PC-3 (cell line): ENCODE measurements at regions of chr14 and their contacts with region 1.

Region 1: DNA sequence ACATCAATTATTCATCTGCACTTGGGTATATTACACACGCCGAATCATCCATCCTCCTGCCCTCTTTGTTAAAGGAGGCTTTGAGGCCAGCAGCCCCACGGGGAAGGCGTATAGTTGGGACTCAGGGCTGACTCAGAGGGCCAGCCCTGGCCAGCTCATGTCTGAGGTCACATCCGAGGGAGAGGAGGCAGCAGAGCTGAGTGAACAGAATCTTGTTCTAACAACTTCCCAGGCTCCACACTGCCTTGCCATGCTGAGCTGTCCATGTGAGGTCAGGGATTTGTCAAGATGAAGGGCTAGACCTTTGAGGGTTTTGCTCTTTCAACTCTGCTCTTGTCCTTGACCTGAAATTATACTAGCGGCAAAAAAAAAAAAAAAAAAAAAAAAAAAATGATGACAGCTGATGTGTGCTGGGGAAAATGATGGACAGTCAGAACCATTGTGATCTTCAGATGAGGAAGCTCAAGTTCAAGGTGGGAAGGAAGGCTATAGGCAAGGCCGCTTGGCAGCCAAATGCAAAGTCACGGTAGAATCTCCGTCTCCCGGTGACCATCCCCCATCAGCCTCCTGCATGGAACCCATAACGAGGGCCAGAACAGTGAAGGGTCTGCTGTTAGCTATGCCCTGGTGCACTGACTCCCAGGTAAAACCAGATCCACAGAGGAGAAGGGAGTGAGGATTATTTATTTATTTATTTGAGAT is 12.5 kb upstream of the MARK3 start:
- DNase-seq: peak; percentile 97
- ATAC-seq: peak; percentile 100
- H3K4me3 ChIP-seq: no peak overlapping the region
- H3K27ac ChIP-seq: peak overlapping the region; percentile 93
- H3K4me1 ChIP-seq: peaks cover 20% of the 10 kb centered on the region
- H3K27me3 ChIP-seq: no peaks in the 10 kb centered on the region
- CTCF ChIP-seq: no peak

Region 2: GRCh38 chr14:103333754-103334643 is 38.8 kb before region 1 on chr14 and contains the start of gene EIF5:
- CTCF ChIA-PET with region 1: no interaction called
- POLR2A ChIA-PET with region 1: interaction called, 10 read pairs
- intact Hi-C with region 1: no loop called
- DNase-seq: peak; percentile 98
- ATAC-seq: peak; percentile 86
- H3K4me3 ChIP-seq: peak within 1 kb of the TSS; percentile 95
- H3K27ac ChIP-seq: peak within 1 kb of the TSS; percentile 81
- H3K4me1 ChIP-seq: peaks cover 25% of the 10 kb centered on the region
- H3K27me3 ChIP-seq: no peaks in the 10 kb centered on the region
- CTCF ChIP-seq: no peak
- total RNA-seq, gene EIF5: 198 and 216 TPM in 2 replicates

Region 3: GRCh38 chr14:103361868-103362267 is 10.9 kb before region 1 on chr14:
- CTCF ChIA-PET with region 1: no interaction called
- POLR2A ChIA-PET with region 1: interaction called, 4 read pairs
- intact Hi-C with region 1: loop called (anchors 1 kb)
- DNase-seq: peak; percentile 97
- ATAC-seq: peak; percentile 98
- H3K4me3 ChIP-seq: no peak overlapping the region
- H3K27ac ChIP-seq: peak overlapping the region; percentile 90
- H3K4me1 ChIP-seq: peaks cover 16% of the 10 kb centered on the region
- H3K27me3 ChIP-seq: no peaks in the 10 kb centered on the region
- CTCF ChIP-seq: no peak

Region 4: DNA sequence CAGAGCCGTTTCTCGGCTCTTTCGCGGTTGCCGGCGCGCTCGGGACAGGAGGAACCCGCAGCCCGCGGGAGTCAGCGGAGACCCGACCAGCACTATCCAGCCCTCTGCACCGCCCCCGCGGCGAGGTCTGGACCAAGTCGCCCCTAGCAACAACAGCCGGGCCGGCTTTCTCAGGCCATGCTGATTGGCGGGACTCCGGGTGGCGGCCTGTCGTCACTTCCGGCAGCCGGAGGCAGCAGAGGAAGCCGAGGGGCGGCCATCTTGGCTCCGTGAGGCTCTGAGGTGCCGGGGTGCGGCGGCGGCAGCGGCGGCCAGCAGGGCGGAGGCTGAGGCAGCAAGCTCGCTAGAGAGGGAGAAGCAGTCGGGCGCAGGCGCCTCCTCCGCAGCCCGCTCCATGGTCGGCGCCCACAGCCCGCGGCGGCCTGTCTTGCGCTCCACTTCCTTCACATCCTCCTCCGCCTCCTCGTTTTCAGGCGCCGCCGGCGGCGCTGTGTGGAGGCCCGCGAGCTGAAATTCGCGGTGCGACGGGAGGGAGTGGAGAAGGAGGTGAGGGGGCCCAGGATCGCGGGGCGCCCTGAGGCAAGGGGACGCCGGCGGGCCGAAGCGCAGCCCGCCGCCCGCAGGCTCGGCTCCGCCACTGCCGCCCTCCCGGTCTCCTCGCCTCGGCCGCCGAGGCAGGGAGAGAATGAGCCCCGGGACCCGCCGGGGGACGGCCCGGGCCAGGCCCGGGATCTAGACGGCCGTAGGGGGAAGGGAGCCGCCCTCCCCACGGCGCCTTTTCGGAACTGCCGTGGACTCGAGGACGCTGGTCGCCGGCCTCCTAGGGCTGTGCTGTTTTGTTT is 12.6 kb after region 1 on chr14 and contains the start of gene MARK3:
- CTCF ChIA-PET with region 1: no interaction called
- POLR2A ChIA-PET with region 1: interaction called, 37 read pairs
- intact Hi-C with region 1: loop called (anchors 1 kb)
- DNase-seq: peak; percentile 97
- ATAC-seq: peak; percentile 97
- H3K4me3 ChIP-seq: peak within 1 kb of the TSS; percentile 98
- H3K27ac ChIP-seq: peak within 1 kb of the TSS; percentile 73
- H3K4me1 ChIP-seq: peaks cover 18% of the 10 kb centered on the region
- H3K27me3 ChIP-seq: no peaks in the 10 kb centered on the region
- CTCF ChIP-seq: peak; percentile 29; the same call in 1 of the 2 replicates
- total RNA-seq, gene MARK3: 69.9 and 73.4 TPM in 2 replicates

Region 5: DNA sequence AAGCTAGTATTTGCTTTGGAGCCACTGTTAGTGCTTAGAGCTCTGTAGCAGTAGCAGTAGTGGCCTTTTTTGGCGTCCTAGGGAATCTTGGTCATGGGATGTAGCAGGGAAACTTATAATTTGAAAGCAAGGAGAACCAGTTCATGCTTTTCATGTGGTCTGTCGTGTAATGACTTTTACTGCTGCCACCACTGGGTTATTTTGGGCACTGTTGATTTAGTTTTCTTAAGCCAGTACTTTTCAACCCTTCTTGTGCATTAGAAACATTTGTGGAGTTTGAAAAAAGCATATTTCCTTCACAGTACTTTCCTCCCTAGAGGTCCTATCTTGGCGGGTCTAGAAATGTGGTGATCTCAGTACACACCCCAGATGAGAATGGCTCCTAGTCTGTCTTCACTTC is 62.2 kb after region 1 on chr14:
- CTCF ChIA-PET with region 1: no interaction called
- POLR2A ChIA-PET with region 1: interaction called, 17 read pairs
- intact Hi-C with region 1: no loop called
- DNase-seq: peak; percentile 18
- ATAC-seq: no peak
- H3K4me3 ChIP-seq: no peak overlapping the region
- H3K27ac ChIP-seq: no peak overlapping the region
- H3K4me1 ChIP-seq: no peaks in the 10 kb centered on the region
- H3K27me3 ChIP-seq: no peaks in the 10 kb centered on the region
- CTCF ChIP-seq: 0 out of 2 replicates have a peak, but pooled peaks have one; percentile 14